ENCODE measurements at regions of chr18 and their contacts with region 1.

Region 1: GRCh38 chr18:63016270-63016669 is 300.9 kb downstream of the PHLPP1 start:
- DNase-seq: peak; percentile 37
- H3K4me3 ChIP-seq: no peak overlapping the region
- H3K27ac ChIP-seq: no peak overlapping the region
- H3K4me1 ChIP-seq: peaks cover 0 to 2% (median 0%) of the 10 kb centered on the region in 4 donors
- H3K27me3 ChIP-seq: peaks cover 5% of the 10 kb centered on the region
- CTCF ChIP-seq: peak; percentile 82 to 86 (median 84)
- EP300 ChIP-seq: no peak
- POLR2A ChIP-seq: no peak

Region 2: DNA sequence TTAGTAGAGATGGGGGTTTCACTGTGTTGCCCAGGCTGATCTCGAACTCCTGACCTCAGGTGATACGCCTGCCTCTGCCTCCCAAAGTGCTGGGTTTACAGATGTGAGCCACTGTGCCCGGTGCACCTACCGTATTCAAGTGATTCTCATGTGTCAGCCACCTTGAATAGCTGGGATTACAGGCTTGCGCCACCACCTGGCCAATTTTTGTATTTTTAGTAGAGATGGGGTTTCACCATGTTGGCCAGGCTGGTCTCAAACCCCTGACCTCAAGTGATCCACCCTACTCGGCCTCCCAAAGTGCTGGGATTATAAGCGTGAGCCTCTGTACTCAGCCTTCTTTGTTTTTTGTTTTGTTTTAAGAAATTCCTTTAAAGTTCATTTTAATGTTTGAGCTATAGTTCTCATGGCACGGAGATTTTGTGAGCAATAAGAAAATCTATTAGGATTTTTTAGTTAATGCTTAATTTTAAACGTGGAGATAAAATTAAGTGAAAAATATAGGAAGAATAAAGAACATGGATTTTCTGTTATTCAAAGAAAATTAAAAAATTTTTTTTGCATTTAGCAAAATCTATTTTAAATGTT is 58.3 kb before region 1 on chr18:
- in situ Hi-C with region 1: no loop called
- intact Hi-C with region 1: no loop called
- DNase-seq: peak; percentile 44
- H3K4me3 ChIP-seq: no peak overlapping the region
- H3K27ac ChIP-seq: no peak overlapping the region
- H3K4me1 ChIP-seq: no peaks in the 10 kb centered on the region
- H3K27me3 ChIP-seq: no peaks in the 10 kb centered on the region
- CTCF ChIP-seq: peak; percentile 35 to 68 (median 49)
- EP300 ChIP-seq: no peak
- POLR2A ChIP-seq: no peak

Region 3: GRCh38 chr18:63119647-63120046 is 103.4 kb after region 1 on chr18:
- in situ Hi-C with region 1: loop called in 1 of 4 experiments (anchors 10 kb)
- intact Hi-C with region 1: no loop called
- DNase-seq: no peak
- H3K4me3 ChIP-seq: no peak overlapping the region
- H3K27ac ChIP-seq: no peak overlapping the region
- H3K4me1 ChIP-seq: no peaks in the 10 kb centered on the region
- H3K27me3 ChIP-seq: no peaks in the 10 kb centered on the region
- CTCF ChIP-seq: peak in 4 of 5 experiments; percentile 34 to 37 (median 35)
- EP300 ChIP-seq: no peak
- POLR2A ChIP-seq: no peak

Region 4: GRCh38 chr18:63329431-63330145 is 313.3 kb after region 1 on chr18:
- in situ Hi-C with region 1: loop called (anchors 5 to 10 kb)
- intact Hi-C with region 1: no loop called
- DNase-seq: no peak
- H3K4me3 ChIP-seq: no peak overlapping the region
- H3K27ac ChIP-seq: no peak overlapping the region
- H3K4me1 ChIP-seq: no peaks in the 10 kb centered on the region
- H3K27me3 ChIP-seq: no peaks in the 10 kb centered on the region
- CTCF ChIP-seq: no peak
- EP300 ChIP-seq: no peak
- POLR2A ChIP-seq: no peak

Region 5: DNA sequence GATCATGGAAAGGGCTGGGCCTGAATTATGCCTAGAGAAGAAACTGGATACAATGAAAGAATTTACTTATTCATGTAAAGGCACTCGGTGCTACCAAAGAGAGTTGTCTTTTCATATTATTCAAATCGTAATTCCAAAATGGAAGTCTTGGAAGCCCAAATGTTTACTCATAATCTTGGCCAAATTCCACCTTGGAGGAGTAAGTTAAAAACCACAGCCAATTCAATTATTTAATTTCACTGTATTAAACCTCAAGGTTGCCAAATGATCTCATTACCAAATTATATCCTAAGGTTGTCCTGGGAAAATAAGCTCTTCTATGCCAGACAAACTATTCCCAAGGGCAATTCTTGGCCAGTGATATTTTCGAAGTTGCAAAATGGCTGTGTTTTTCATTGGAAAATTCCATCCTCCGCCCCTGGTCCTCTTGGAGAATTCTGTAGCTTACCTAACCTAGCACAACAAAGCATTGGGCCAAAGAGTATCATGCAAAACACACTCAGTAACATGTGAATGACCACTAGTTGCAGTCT is 417.1 kb after region 1 on chr18:
- in situ Hi-C with region 1: loop called in 3 of 4 experiments (anchors 5 to 25 kb)
- intact Hi-C with region 1: no loop called
- DNase-seq: no peak
- H3K4me3 ChIP-seq: no peak overlapping the region
- H3K27ac ChIP-seq: no peak overlapping the region
- H3K4me1 ChIP-seq: no peaks in the 10 kb centered on the region
- H3K27me3 ChIP-seq: no peaks in the 10 kb centered on the region
- CTCF ChIP-seq: no peak
- EP300 ChIP-seq: no peak
- POLR2A ChIP-seq: no peak

Region 6: GRCh38 chr18:63444567-63444966 is 428.3 kb after region 1 on chr18:
- in situ Hi-C with region 1: loop called in 2 of 4 experiments (anchors 5 to 25 kb)
- intact Hi-C with region 1: loop called (anchors 10 kb)
- DNase-seq: no peak
- H3K4me3 ChIP-seq: no peak overlapping the region
- H3K27ac ChIP-seq: peak overlapping the region; percentile 41 to 76 (median 58)
- H3K4me1 ChIP-seq: peaks cover 0 to 15% (median 4%) of the 10 kb centered on the region in 4 donors
- H3K27me3 ChIP-seq: no peaks in the 10 kb centered on the region
- CTCF ChIP-seq: no peak
- EP300 ChIP-seq: no peak
- POLR2A ChIP-seq: no peak